Ovary (tissue), 10 donors: ENCODE measurements at regions of chr6 and their contacts with region 1.

Region 1: DNA sequence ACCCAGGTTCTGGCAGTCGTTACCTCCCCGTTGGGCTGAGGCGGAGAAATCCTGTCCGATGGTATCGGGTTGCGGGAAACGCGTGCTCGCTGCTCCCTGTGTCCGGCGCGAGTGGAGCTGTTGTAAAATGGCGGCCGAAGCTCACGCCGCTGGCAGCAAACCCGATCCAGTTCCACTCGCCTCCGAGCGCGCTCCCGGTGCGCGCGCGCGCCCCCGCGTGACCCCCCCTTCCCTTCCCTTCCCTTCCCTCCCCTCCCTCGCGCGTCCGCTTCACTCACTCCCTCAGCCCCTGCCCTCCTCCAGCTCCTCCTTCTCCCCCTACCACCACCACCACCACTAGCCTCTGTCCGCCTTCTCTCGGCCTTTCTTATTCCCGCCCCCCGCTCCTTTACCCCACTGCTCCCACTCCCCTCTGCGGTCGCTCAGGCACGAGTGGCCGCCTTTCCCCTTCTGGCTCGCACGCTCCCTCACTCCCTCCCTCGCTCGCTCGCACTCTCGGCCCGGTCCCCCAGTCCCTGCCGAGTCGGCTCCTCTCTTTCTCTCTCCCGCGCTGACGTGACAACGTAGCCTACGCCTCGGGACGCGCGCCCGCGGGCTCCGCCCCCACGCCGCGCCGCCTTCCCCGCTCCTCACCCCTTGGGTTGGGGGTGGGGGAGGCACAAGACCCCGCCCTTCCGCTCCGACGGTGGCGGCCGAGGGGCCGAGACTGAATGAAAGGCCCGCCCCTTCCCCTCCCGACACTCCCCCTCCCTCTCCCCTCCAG is at the start of gene SYNCRIP:
- DNase-seq: peak; percentile 99
- H3K4me3 ChIP-seq: peak within 1 kb of the TSS; percentile 77
- H3K27ac ChIP-seq: peak within 1 kb of the TSS; percentile 93 to 96
- H3K4me1 ChIP-seq: peaks cover 6% of the 10 kb centered on the region
- H3K27me3 ChIP-seq: no peaks in the 10 kb centered on the region
- CTCF ChIP-seq: no peak
- EP300 ChIP-seq: peak; percentile 59
- POLR2A ChIP-seq: peak; percentile 96
- total RNA-seq, gene SYNCRIP: 45.5 to 109 (median 92.8) TPM

Region 2: GRCh38 chr6:85498596-85499258 is 144.2 kb before region 1 on chr6:
- intact Hi-C with region 1: no loop called
- DNase-seq: no peak
- H3K4me3 ChIP-seq: no peak overlapping the region
- H3K27ac ChIP-seq: no peak overlapping the region
- H3K4me1 ChIP-seq: no peaks in the 10 kb centered on the region
- H3K27me3 ChIP-seq: no peaks in the 10 kb centered on the region
- CTCF ChIP-seq: no peak
- EP300 ChIP-seq: no peak
- POLR2A ChIP-seq: no peak

Region 3: GRCh38 chr6:85620308-85620707 is 22.6 kb before region 1 on chr6:
- intact Hi-C with region 1: no loop called
- DNase-seq: no peak
- H3K4me3 ChIP-seq: no peak overlapping the region
- H3K27ac ChIP-seq: no peak overlapping the region
- H3K4me1 ChIP-seq: no peaks in the 10 kb centered on the region
- H3K27me3 ChIP-seq: no peaks in the 10 kb centered on the region
- CTCF ChIP-seq: no peak
- EP300 ChIP-seq: no peak
- POLR2A ChIP-seq: no peak

Region 4: DNA sequence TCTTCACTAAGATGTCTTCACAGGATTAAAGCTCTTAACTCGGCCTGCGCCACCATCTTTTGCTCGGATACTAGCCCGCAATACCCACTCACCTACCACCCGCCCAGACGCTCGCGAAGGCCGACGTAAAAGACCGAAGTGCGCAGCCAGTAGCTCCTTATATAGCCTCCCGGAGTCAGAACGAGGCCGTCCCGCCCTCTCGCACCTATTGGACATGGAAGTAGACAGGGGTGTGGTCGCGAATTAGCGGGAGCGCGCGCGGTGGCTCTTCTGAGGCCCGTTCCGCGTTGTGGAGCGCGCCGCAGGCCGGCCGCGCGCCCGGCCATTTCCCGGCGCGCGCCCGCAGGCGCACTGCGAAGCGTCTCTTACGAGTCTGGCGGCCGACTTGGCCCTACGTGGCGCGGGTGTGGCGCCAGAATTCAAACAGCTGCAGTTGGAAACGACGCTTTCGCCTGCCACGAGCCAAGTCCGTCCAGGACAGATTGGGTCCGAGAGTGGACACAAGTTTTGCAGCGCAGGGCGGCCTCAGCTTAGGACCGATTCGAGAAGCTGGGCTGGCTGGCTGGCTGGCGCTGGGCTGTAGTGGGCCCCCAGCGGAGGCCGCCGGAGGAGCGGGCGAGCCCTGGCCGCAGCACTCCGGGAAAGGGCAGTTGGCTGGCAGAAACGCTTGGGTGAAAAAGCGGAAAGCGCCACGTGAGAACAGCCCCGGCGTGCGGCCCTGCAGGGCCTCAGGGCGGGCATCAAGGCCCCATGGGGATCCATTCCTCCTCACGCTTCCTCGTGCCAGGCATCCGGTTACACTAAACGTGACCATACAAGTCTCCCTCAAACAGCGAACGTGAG is 35.9 kb after region 1 on chr6:
- intact Hi-C with region 1: loop called (anchors 1 to 5 kb)
- DNase-seq: peak; percentile 98 to 99 (median 98)
- H3K4me3 ChIP-seq: peak overlapping the region; percentile 90
- H3K27ac ChIP-seq: peak overlapping the region; percentile 46 to 71
- H3K4me1 ChIP-seq: peaks cover 6% of the 10 kb centered on the region
- H3K27me3 ChIP-seq: no peaks in the 10 kb centered on the region
- CTCF ChIP-seq: peak in 1 of 3 donors; percentile 28
- EP300 ChIP-seq: no peak
- POLR2A ChIP-seq: peak; percentile 99

Region 5: GRCh38 chr6:85945459-85946185 is 302.7 kb after region 1 on chr6:
- intact Hi-C with region 1: no loop called
- DNase-seq: no peak
- H3K4me3 ChIP-seq: no peak overlapping the region
- H3K27ac ChIP-seq: no peak overlapping the region
- H3K4me1 ChIP-seq: peaks cover 1% of the 10 kb centered on the region
- H3K27me3 ChIP-seq: no peaks in the 10 kb centered on the region
- CTCF ChIP-seq: no peak
- EP300 ChIP-seq: no peak
- POLR2A ChIP-seq: no peak